A673 (cell line): ENCODE measurements at regions of chr4 and their contacts with region 1.

Region 1: DNA sequence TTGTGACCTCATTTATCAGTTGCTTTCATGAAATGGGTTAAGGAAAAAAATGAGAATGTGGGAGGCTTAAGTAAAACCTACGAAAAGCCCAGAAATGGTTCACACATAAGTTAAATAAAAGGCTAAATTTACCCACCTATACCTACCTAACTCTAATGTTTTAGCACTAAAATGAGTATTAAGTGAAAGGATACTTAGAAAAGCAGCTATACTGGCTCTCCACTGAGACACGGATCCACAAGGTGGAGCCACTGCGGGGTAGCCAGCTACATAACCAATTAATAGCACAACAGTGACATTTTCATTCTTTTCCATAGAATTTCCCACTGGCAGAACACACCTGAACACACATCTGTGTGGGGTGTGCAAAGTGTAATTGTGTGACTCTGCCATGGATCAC is 101.9 kb downstream of the MAML3 start:
- DNase-seq: peak; percentile 47
- H3K4me3 ChIP-seq: no peak overlapping the region
- H3K27ac ChIP-seq: no peak overlapping the region
- H3K4me1 ChIP-seq: peaks cover 11% of the 10 kb centered on the region
- H3K27me3 ChIP-seq: no peaks in the 10 kb centered on the region
- CTCF ChIP-seq: peak; percentile 77

Region 2: DNA sequence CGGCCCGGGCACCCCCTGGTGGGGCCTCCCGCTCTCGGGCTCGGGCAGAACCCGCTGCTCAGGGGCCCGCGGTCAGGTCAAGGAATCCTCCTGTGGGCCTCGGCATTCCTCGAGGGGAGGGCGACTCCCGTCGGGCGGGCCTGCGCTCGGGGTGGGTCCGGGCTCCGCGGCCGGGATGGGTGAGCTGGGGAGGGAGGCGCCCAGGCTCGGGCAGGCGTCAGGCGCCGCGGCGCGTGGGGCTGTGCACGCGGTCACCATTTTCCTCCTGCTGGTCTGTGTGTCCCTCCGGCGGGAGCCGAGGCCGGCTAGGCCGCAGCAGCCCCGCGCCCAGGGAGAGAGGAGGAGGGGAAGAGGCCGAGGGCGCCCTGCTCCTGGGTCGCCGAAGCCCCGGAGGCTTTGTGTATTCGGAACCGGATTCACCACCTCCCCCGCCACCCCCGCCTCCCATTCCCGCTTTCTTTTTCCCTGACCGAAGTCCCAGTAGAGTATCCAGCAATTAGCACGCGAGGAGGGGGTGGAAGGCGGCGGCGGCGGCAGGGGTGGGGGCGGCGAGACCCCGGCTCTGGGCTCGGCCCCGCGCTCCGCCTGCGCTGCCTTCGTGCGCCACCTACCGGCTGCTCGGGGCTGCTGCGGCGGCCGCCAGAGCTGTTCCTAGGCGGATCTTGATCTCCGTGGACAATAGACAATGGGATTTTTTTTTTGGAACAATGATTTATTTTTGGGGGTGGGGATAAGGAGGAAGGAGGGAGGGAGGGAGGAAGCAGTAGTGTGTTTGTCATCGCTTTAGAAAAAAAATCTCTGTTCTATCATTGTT is 200.9 kb after region 1 on chr4:
- CTCF ChIA-PET with region 1: interaction called, 15 read pairs
- POLR2A ChIA-PET with region 1: no interaction called
- intact Hi-C with region 1: loop called (anchors 1 kb)
- DNase-seq: peak; percentile 76
- H3K4me3 ChIP-seq: peak overlapping the region; percentile 60
- H3K27ac ChIP-seq: peak overlapping the region; percentile 81
- H3K4me1 ChIP-seq: peaks cover 13% of the 10 kb centered on the region
- H3K27me3 ChIP-seq: no peaks in the 10 kb centered on the region
- CTCF ChIP-seq: peak; percentile 88

Region 3: DNA sequence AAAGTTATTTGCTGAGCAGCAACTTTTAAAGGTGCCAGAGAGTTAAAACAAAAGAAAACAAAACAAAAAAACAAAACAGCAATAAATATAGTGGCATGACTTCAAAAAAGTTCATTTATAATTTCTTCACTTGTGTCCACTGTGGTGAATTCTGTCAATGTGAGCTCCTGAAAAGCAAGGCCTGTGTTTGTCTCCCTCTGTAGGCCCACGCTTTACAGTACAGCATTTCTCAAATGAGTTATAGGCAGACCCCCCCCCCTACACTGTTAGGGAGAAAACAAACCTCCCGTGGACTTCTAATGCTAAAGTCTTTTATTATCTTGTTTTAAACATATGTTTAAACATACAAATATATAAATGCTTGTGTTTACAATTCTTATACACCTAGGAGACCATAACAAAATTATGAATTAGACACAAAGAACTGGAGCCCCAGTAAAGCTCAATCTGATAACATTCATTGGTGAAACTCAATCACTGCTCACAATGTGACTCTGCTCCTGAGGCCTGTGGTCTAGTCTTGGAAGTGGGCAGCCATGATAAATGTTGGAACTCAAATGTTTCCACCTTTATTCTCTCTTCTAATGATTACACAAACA is 274.4 kb after region 1 on chr4:
- CTCF ChIA-PET with region 1: interaction called, 12 read pairs
- POLR2A ChIA-PET with region 1: no interaction called
- intact Hi-C with region 1: no loop called
- DNase-seq: peak; percentile 41
- H3K4me3 ChIP-seq: no peak overlapping the region
- H3K27ac ChIP-seq: no peak overlapping the region
- H3K4me1 ChIP-seq: no peaks in the 10 kb centered on the region
- H3K27me3 ChIP-seq: no peaks in the 10 kb centered on the region
- CTCF ChIP-seq: peak; percentile 70

Region 4: GRCh38 chr4:141999446-142000143 is 1947.5 kb after region 1 on chr4:
- CTCF ChIA-PET with region 1: no interaction called
- POLR2A ChIA-PET with region 1: no interaction called
- intact Hi-C with region 1: no loop called
- DNase-seq: no peak
- H3K4me3 ChIP-seq: no peak overlapping the region
- H3K27ac ChIP-seq: no peak overlapping the region
- H3K4me1 ChIP-seq: no peaks in the 10 kb centered on the region
- H3K27me3 ChIP-seq: no peaks in the 10 kb centered on the region
- CTCF ChIP-seq: no peak